ENCODE measurements at regions of chr1 and their contacts with region 1.

Region 1: GRCh38 chr1:203304919-203305808 is at the start of gene BTG2:
- DNase-seq: no peak
- ATAC-seq: peak; percentile 82
- H3K4me3 ChIP-seq: peak within 1 kb of the TSS; percentile 97
- H3K27ac ChIP-seq: peak within 1 kb of the TSS; percentile 91
- H3K4me1 ChIP-seq: peaks cover 38% of the 10 kb centered on the region
- H3K27me3 ChIP-seq: no peaks in the 10 kb centered on the region
- CTCF ChIP-seq: no peak
- EP300 ChIP-seq: no peak
- POLR2A ChIP-seq: peak; percentile 98
- RAD21 ChIP-seq: 0 out of 2 replicates have a peak, but pooled peaks have one; percentile 8
- polyA plus RNA-seq, gene BTG2: 23.3 to 37.2 TPM

Region 2: DNA sequence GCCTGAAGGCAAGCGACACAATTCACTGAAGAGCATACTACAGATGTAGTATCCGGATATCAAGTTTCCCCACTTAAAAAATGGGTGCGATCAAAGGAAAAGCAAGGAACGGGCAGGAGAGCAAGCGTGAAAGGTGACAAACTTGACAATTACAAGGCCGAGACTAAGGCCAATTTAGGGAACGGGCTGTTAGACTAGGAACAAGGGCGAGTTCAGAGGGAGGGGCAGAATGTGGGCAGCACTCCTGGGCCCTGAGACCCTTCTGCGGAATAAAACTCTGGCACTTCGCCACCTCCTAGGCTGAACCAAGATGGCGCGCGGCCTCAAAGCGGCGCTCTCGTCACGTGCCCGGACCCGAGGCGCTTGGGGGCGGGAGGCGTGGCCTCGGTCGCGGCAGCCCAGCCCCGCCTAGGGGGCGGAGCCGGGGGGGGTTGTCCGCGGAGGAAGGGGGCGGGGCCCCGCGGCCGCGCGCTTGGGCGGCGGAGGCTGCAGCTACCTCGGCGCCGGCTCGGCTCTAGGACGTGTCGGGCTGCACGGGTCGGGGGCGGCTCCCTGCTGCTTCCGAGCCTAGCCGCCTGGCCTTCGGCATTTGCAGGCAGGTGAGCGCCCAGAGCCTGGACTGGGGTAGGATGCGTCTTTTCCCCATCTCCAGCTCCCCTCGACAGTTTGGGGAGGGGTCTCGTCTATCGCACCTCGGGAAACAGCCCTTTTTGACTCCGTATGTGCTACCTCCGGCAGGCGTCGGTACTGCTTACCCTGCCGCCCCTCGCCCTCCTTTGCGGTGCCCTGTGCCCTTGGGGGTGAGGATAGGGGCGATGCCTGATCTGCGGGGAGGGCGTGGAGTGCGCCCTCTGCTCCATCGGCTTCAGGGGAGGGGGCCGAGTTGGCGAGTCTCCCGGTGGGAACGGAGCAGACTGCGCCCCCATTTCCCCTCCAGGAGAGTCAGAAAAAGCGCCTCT is 278.9 kb before region 1 on chr1 and contains the start of gene PPFIA4:
- CTCF ChIA-PET with region 1: no interaction called
- POLR2A ChIA-PET with region 1: no interaction called
- RAD21 ChIA-PET with region 1: no interaction called
- SMC1A ChIA-PET with region 1: no interaction called
- in situ Hi-C with region 1: no loop called
- intact Hi-C with region 1: no loop called
- DNase-seq: peak; percentile 42
- ATAC-seq: peak; percentile 96
- H3K4me3 ChIP-seq: peak within 1 kb of the TSS; percentile 93
- H3K27ac ChIP-seq: no peak within 1 kb of the TSS
- H3K4me1 ChIP-seq: no peaks in the 10 kb centered on the region; the same call in none of the 2 replicates
- H3K27me3 ChIP-seq: no peaks in the 10 kb centered on the region; a peak in 2 of 4 replicates
- CTCF ChIP-seq: peak in 1 of 3 experiments; percentile 24; a peak in 1 of 6 replicates
- EP300 ChIP-seq: no peak
- POLR2A ChIP-seq: peak; percentile 64
- RAD21 ChIP-seq: no peak
- polyA plus RNA-seq, gene PPFIA4: 0.02 to 0.11 TPM

Region 3: GRCh38 chr1:203090421-203091387 is 214.5 kb before region 1 on chr1:
- CTCF ChIA-PET with region 1: no interaction called
- POLR2A ChIA-PET with region 1: no interaction called
- RAD21 ChIA-PET with region 1: no interaction called
- SMC1A ChIA-PET with region 1: no interaction called
- in situ Hi-C with region 1: no loop called
- intact Hi-C with region 1: no loop called
- DNase-seq: no peak
- ATAC-seq: no peak
- H3K4me3 ChIP-seq: no peak overlapping the region
- H3K27ac ChIP-seq: no peak overlapping the region
- H3K4me1 ChIP-seq: no peaks in the 10 kb centered on the region
- H3K27me3 ChIP-seq: peaks cover 0 to 2% of the 10 kb centered on the region in 2 experiments; a peak in 2 of 4 replicates
- CTCF ChIP-seq: no peak
- EP300 ChIP-seq: no peak
- POLR2A ChIP-seq: no peak
- RAD21 ChIP-seq: no peak

Region 4: GRCh38 chr1:203206129-203206687 is 99.0 kb before region 1 on chr1:
- CTCF ChIA-PET with region 1: no interaction called
- POLR2A ChIA-PET with region 1: no interaction called
- RAD21 ChIA-PET with region 1: no interaction called
- SMC1A ChIA-PET with region 1: no interaction called
- in situ Hi-C with region 1: no loop called
- intact Hi-C with region 1: no loop called
- DNase-seq: no peak
- ATAC-seq: no peak
- H3K4me3 ChIP-seq: no peak overlapping the region
- H3K27ac ChIP-seq: no peak overlapping the region
- H3K4me1 ChIP-seq: no peaks in the 10 kb centered on the region
- H3K27me3 ChIP-seq: no peaks in the 10 kb centered on the region; a peak in 3 of 4 replicates
- CTCF ChIP-seq: no peak
- EP300 ChIP-seq: no peak
- POLR2A ChIP-seq: no peak
- RAD21 ChIP-seq: no peak

Region 5: GRCh38 chr1:203320591-203321272 is 15.6 kb after region 1 on chr1:
- CTCF ChIA-PET with region 1: interaction called, 281 read pairs
- POLR2A ChIA-PET with region 1: interaction called, 393 read pairs
- RAD21 ChIA-PET with region 1: interaction called, 351 read pairs
- SMC1A ChIA-PET with region 1: interaction called, 406 read pairs
- in situ Hi-C with region 1: no loop called
- intact Hi-C with region 1: no loop called
- DNase-seq: no peak
- ATAC-seq: peak; percentile 68
- H3K4me3 ChIP-seq: no peak overlapping the region; the same call in 1 of the 2 replicates
- H3K27ac ChIP-seq: peak overlapping the region; percentile 70
- H3K4me1 ChIP-seq: peaks cover 56% of the 10 kb centered on the region
- H3K27me3 ChIP-seq: no peaks in the 10 kb centered on the region
- CTCF ChIP-seq: no peak
- EP300 ChIP-seq: peak; percentile 47 to 89; a peak in 2 of 4 replicates
- POLR2A ChIP-seq: no peak; the same call in 1 of the 2 replicates
- RAD21 ChIP-seq: no peak

Region 6: GRCh38 chr1:203326830-203327683 is 21.9 kb after region 1 on chr1:
- CTCF ChIA-PET with region 1: interaction called, 281 read pairs
- POLR2A ChIA-PET with region 1: interaction called, 393 read pairs
- RAD21 ChIA-PET with region 1: interaction called, 351 read pairs
- SMC1A ChIA-PET with region 1: interaction called, 406 read pairs
- in situ Hi-C with region 1: no loop called
- intact Hi-C with region 1: loop called (anchors 1 kb)
- DNase-seq: peak; percentile 88
- ATAC-seq: peak; percentile 81
- H3K4me3 ChIP-seq: peak overlapping the region; percentile 60
- H3K27ac ChIP-seq: peak overlapping the region; percentile 98
- H3K4me1 ChIP-seq: peaks cover 62% of the 10 kb centered on the region
- H3K27me3 ChIP-seq: no peaks in the 10 kb centered on the region
- CTCF ChIP-seq: peak in 2 of 3 experiments; percentile 12 to 22; a peak in 1 of 6 replicates
- EP300 ChIP-seq: peak; percentile 62 to 85; a peak in 3 of 4 replicates
- POLR2A ChIP-seq: peak; percentile 78
- RAD21 ChIP-seq: no peak

Measured in GM12878 (cell line).